ENCODE measurements at regions of chr1 and their contacts with region 1.

Region 1: GRCh38 chr1:25895365-25895993 is 10.7 kb downstream of the STMN1 start:
- DNase-seq: peak; percentile 92
- CTCF ChIP-seq: peak; percentile 98

Region 2: GRCh38 chr1:25997828-25998761 is 102.6 kb after region 1 on chr1 and contains the start of gene PAFAH2:
- in situ Hi-C with region 1: loop called (anchors 10 kb)
- DNase-seq: peak; percentile 92
- CTCF ChIP-seq: peak; percentile 99